Testis (tissue), 5 donors: ENCODE measurements at regions of chr15 and their contacts with region 1.

Region 1: GRCh38 chr15:32994810-32995424 is 199.6 kb downstream of the FMN1 start:
- DNase-seq: no peak
- H3K4me3 ChIP-seq: no peak overlapping the region
- H3K27ac ChIP-seq: no peak overlapping the region
- H3K4me1 ChIP-seq: no peaks in the 10 kb centered on the region
- H3K27me3 ChIP-seq: no peaks in the 10 kb centered on the region
- CTCF ChIP-seq: peak in 2 of 3 experiments; percentile 28 to 62
- POLR2A ChIP-seq: no peak

Region 2: GRCh38 chr15:32659340-32660155 is 335.4 kb before region 1 on chr15:
- intact Hi-C with region 1: loop called (anchors 10 kb)
- DNase-seq: no peak
- H3K4me3 ChIP-seq: no peak overlapping the region
- H3K27ac ChIP-seq: no peak overlapping the region
- H3K4me1 ChIP-seq: no peaks in the 10 kb centered on the region
- H3K27me3 ChIP-seq: no peaks in the 10 kb centered on the region
- CTCF ChIP-seq: no peak
- POLR2A ChIP-seq: no peak

Region 3: DNA sequence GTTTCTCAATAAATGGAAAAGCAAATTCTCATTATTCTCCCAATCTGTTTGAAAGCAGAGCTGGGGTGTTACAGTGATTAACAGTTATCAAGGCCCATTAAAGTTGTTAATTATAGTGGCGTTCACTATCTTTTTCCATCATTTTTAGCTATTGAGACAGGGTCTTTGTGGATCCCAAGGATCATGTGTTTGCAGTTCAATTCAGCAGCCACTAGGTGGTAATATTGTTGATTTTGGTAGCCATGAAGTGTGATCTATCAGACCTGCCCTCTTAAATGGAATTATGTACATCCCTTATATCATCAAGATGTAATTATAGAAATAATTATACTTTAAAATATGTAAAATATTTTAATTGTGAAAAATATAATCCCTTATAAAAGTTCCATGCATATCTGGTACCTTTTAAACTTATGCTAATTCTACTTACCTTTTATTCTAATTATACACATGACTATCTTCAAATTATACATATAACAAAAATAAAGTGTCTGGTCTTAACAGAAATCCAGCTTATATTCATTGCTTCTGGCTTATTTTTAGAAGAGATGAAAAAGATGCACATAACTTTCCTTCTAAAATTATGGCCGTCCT is 150.7 kb before region 1 on chr15:
- intact Hi-C with region 1: loop called (anchors 5 kb)
- DNase-seq: no peak
- H3K4me3 ChIP-seq: no peak overlapping the region
- H3K27ac ChIP-seq: no peak overlapping the region
- H3K4me1 ChIP-seq: no peaks in the 10 kb centered on the region
- H3K27me3 ChIP-seq: no peaks in the 10 kb centered on the region
- CTCF ChIP-seq: peak in 2 of 3 experiments; percentile 59 to 62
- POLR2A ChIP-seq: no peak